CD8-positive, alpha-beta T cell (primary cell): ENCODE measurements at regions of chr15 and their contacts with region 1.

Region 1: GRCh38 chr15:60740787-60741354 is 261.9 kb upstream of the ICE2 start:
- DNase-seq: peak in 2 of 9 experiments; percentile 54 to 66
- ATAC-seq: peak; percentile 73
- H3K4me3 ChIP-seq: no peak overlapping the region
- H3K4me3 Mint-ChIP-seq: no peak overlapping the region
- H3K27ac ChIP-seq: no peak overlapping the region
- H3K27ac Mint-ChIP-seq: peak overlapping the region; percentile 73
- H3K4me1 ChIP-seq: peaks cover 5% of the 10 kb centered on the region
- H3K4me1 Mint-ChIP-seq: peaks cover 15% of the 10 kb centered on the region
- H3K27me3 ChIP-seq: no peaks in the 10 kb centered on the region
- H3K27me3 Mint-ChIP-seq: no peaks in the 10 kb centered on the region
- CTCF ChIP-seq: no peak

Region 2: DNA sequence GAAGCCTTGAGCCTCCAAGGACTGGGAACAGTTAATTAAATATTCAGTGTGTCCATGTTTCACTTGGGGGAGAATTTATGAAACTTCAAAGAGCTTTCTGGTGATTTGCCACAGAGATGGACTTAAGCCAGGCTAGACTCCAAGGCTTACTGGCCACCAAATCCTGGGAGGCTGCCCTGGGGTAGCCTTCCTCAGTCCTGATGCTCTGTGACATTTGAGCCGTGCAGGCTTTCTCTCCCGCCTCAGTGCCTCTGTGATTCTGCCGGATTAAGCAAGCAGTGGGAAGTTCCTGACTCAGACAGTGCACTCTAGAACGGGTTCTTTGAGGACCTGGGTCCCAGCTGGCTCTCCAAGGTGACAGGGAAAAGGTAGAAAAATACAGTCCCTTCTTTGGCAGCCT is 52.8 kb after region 1 on chr15:
- CTCF ChIA-PET with region 1: no interaction called
- POLR2A ChIA-PET with region 1: no interaction called
- intact Hi-C with region 1: loop called in 1 of 2 experiments (anchors 5 kb)
- DNase-seq: no peak
- ATAC-seq: no peak
- H3K4me3 ChIP-seq: no peak overlapping the region
- H3K4me3 Mint-ChIP-seq: no peak overlapping the region
- H3K27ac ChIP-seq: no peak overlapping the region
- H3K27ac Mint-ChIP-seq: no peak overlapping the region
- H3K4me1 ChIP-seq: peaks cover 15% of the 10 kb centered on the region
- H3K4me1 Mint-ChIP-seq: peaks cover 33% of the 10 kb centered on the region
- H3K27me3 ChIP-seq: no peaks in the 10 kb centered on the region
- H3K27me3 Mint-ChIP-seq: no peaks in the 10 kb centered on the region
- CTCF ChIP-seq: no peak

Region 3: DNA sequence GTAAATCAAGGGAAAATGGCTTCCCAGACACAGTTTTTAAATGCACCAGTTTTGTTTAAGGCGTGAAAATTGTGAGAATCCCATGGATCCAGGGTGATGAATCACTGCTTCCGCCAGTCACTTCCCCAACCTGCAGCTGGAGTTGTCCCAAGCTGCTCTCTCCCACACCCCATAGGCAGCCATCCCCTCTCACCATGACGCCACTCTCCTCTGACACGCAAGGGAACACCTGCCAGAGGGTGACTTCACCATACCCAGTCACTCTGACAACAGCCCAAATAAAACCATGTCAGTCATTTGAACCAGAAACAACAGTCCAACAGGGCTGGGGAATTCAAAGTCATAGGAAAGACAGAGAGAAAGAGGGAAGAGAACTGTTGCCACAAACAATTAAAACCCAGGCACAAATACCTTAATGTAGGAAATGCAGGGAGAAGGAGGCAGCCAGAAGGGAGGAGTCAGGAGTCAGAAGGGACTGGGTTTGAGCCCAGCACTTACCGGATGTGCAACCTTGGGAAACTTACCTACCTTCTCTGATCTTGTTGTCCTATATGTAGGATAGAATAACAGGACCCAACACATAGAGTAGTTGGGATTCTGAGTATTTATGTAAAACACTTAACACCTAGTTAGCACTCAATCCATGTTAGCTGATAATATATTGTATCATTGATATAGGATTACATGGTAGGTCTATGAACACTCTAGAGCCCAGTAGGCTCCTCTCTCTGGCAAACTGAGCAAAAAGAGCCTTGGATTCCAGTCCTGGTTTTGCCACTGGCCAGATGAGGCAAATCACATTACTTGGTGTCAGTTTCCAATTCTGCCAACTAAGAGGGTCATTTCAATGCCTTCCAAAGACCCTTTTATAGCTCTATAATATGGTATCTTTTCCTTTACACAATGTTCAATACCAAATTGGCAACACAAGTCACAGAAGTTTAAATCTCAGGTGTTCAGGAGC is 64.4 kb after region 1 on chr15:
- CTCF ChIA-PET with region 1: no interaction called
- POLR2A ChIA-PET with region 1: no interaction called
- intact Hi-C with region 1: loop called in 1 of 2 experiments (anchors 10 kb)
- DNase-seq: no peak
- ATAC-seq: no peak
- H3K4me3 ChIP-seq: no peak overlapping the region
- H3K4me3 Mint-ChIP-seq: no peak overlapping the region
- H3K27ac ChIP-seq: no peak overlapping the region
- H3K27ac Mint-ChIP-seq: no peak overlapping the region
- H3K4me1 ChIP-seq: peaks cover 62% of the 10 kb centered on the region
- H3K4me1 Mint-ChIP-seq: peaks cover 67% of the 10 kb centered on the region
- H3K27me3 ChIP-seq: no peaks in the 10 kb centered on the region
- H3K27me3 Mint-ChIP-seq: no peaks in the 10 kb centered on the region
- CTCF ChIP-seq: no peak